ENCODE measurements at regions of chr16 and their contacts with region 1.

Region 1: GRCh38 chr16:89319883-89320781 is 102.6 kb downstream of the ZNF778 start:
- DNase-seq: no peak
- H3K4me3 ChIP-seq: no peak overlapping the region
- H3K4me3 Mint-ChIP-seq: peak overlapping the region in 7 of 8 donors; percentile 48 to 77 (median 68)
- H3K27ac ChIP-seq: no peak overlapping the region
- H3K27ac Mint-ChIP-seq: peak overlapping the region in 6 of 7 donors; percentile 55 to 98 (median 74)
- H3K4me1 ChIP-seq: peaks cover 99% of the 10 kb centered on the region
- H3K4me1 Mint-ChIP-seq: peaks cover 72 to 96% (median 89%) of the 10 kb centered on the region in 4 donors
- H3K27me3 ChIP-seq: no peaks in the 10 kb centered on the region
- H3K27me3 Mint-ChIP-seq: no peaks in the 10 kb centered on the region

Region 2: GRCh38 chr16:89241187-89242007 is 78.7 kb before region 1 on chr16:
- CTCF ChIA-PET with region 1: interaction called, 13 read pairs
- POLR2A ChIA-PET with region 1: interaction called, 17 read pairs
- intact Hi-C with region 1: no loop called
- DNase-seq: peak; percentile 92 to 97 (median 93)
- H3K4me3 ChIP-seq: peak overlapping the region; percentile 73 to 80
- H3K4me3 Mint-ChIP-seq: peak overlapping the region; percentile 90 to 98 (median 96)
- H3K27ac ChIP-seq: peak overlapping the region; percentile 91
- H3K27ac Mint-ChIP-seq: peak overlapping the region; percentile 95 to 100 (median 99)
- H3K4me1 ChIP-seq: peaks cover 13% of the 10 kb centered on the region
- H3K4me1 Mint-ChIP-seq: peaks cover 8 to 36% (median 18%) of the 10 kb centered on the region in 4 donors
- H3K27me3 ChIP-seq: no peaks in the 10 kb centered on the region
- H3K27me3 Mint-ChIP-seq: no peaks in the 10 kb centered on the region

Region 3: GRCh38 chr16:89297156-89297883 is 22.8 kb before region 1 on chr16:
- CTCF ChIA-PET with region 1: no interaction called
- POLR2A ChIA-PET with region 1: interaction called, 15 read pairs
- intact Hi-C with region 1: no loop called
- DNase-seq: peak in 1 of 5 donors; percentile 28
- H3K4me3 ChIP-seq: no peak overlapping the region
- H3K4me3 Mint-ChIP-seq: peak overlapping the region in 2 of 8 donors; percentile 5 to 42
- H3K27ac ChIP-seq: no peak overlapping the region
- H3K27ac Mint-ChIP-seq: peak overlapping the region in 5 of 7 donors; percentile 41 to 90 (median 47)
- H3K4me1 ChIP-seq: peaks cover 29% of the 10 kb centered on the region
- H3K4me1 Mint-ChIP-seq: peaks cover 25 to 53% (median 33%) of the 10 kb centered on the region in 4 donors
- H3K27me3 ChIP-seq: no peaks in the 10 kb centered on the region
- H3K27me3 Mint-ChIP-seq: no peaks in the 10 kb centered on the region

Region 4: GRCh38 chr16:89357055-89357816 is 37.1 kb after region 1 on chr16:
- CTCF ChIA-PET with region 1: interaction called, 4 read pairs
- POLR2A ChIA-PET with region 1: interaction called, 13 read pairs
- intact Hi-C with region 1: loop called (anchors 1 kb)
- DNase-seq: no peak
- H3K4me3 ChIP-seq: no peak overlapping the region
- H3K4me3 Mint-ChIP-seq: peak overlapping the region in 7 of 8 donors; percentile 40 to 86 (median 80)
- H3K27ac ChIP-seq: peak overlapping the region; percentile 60
- H3K27ac Mint-ChIP-seq: peak overlapping the region; percentile 75 to 90 (median 87)
- H3K4me1 ChIP-seq: peaks cover 88% of the 10 kb centered on the region
- H3K4me1 Mint-ChIP-seq: peaks cover 68 to 95% (median 83%) of the 10 kb centered on the region in 4 donors
- H3K27me3 ChIP-seq: no peaks in the 10 kb centered on the region
- H3K27me3 Mint-ChIP-seq: no peaks in the 10 kb centered on the region

Region 5: GRCh38 chr16:89410794-89411309 is 90.7 kb after region 1 on chr16:
- CTCF ChIA-PET with region 1: interaction called, 3 read pairs
- POLR2A ChIA-PET with region 1: interaction called, 16 read pairs
- intact Hi-C with region 1: no loop called
- DNase-seq: peak in 2 of 5 donors; percentile 21 to 28
- H3K4me3 ChIP-seq: no peak overlapping the region
- H3K4me3 Mint-ChIP-seq: peak overlapping the region in 7 of 8 donors; percentile 59 to 84 (median 69)
- H3K27ac ChIP-seq: peak overlapping the region; percentile 45
- H3K27ac Mint-ChIP-seq: peak overlapping the region; percentile 88 to 97 (median 95)
- H3K4me1 ChIP-seq: peaks cover 93% of the 10 kb centered on the region
- H3K4me1 Mint-ChIP-seq: peaks cover 57 to 93% (median 79%) of the 10 kb centered on the region in 4 donors
- H3K27me3 ChIP-seq: no peaks in the 10 kb centered on the region
- H3K27me3 Mint-ChIP-seq: no peaks in the 10 kb centered on the region

Region 6: DNA sequence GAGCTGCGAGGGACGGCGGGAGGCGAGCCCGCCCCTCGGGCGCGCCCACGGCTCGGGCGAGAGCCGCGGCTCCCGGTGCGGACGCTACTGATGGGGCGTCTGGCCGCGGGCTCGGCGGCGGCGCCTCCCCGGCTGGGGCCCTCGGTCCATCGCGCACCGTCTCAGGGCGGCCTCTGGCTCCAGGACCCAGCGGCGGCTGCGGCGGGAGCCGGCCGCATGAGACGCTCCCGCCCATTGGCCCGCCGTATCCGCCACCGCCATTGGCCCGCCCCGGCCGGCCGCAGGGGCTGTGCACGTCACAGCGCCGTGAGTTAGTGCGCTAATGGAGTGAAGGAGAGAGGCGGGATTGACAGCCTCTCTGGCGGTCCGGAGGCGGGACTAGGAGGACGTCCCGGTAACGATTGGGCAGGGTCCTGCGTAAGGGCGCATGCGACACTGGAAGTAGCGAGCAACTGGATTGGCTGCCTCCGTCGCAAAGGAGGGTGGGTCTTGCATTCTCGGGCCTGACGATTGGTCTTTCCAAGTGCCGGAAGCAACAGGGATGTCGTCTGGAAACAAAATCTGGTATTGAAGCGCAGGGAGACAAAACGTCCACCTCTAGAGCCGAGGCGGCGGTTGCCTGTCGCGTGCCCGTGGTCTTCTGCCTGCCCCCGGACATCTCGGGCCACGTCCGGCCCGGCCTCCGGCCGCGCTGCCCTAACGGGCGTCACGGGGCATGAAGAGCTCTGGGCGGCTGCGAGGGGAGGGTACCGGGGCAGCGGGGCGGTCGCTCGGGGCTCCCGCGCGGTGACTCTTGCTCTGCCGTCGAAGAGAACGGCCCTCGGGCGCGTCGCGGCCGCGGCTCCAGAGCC is 170.5 kb after region 1 on chr16 and contains the start of gene ANKRD11:
- CTCF ChIA-PET with region 1: no interaction called
- POLR2A ChIA-PET with region 1: interaction called, 27 read pairs
- intact Hi-C with region 1: loop called (anchors 5 kb)
- DNase-seq: peak; percentile 99 to 100 (median 100)
- H3K4me3 ChIP-seq: peak within 1 kb of the TSS; percentile 64 to 72
- H3K4me3 Mint-ChIP-seq: peak within 1 kb of the TSS; percentile 88 to 97 (median 94)
- H3K27ac ChIP-seq: peak within 1 kb of the TSS; percentile 95
- H3K27ac Mint-ChIP-seq: peak within 1 kb of the TSS; percentile 96 to 99 (median 97)
- H3K4me1 ChIP-seq: peaks cover 57% of the 10 kb centered on the region
- H3K4me1 Mint-ChIP-seq: peaks cover 35 to 77% (median 57%) of the 10 kb centered on the region in 4 donors
- H3K27me3 ChIP-seq: no peaks in the 10 kb centered on the region
- H3K27me3 Mint-ChIP-seq: no peaks in the 10 kb centered on the region
- total RNA-seq, gene ANKRD11: 229 to 246 TPM

Region 7: GRCh38 chr16:89560378-89561141 is 240.4 kb after region 1 on chr16 and contains the start of gene RPL13:
- CTCF ChIA-PET with region 1: interaction called, 12 read pairs
- POLR2A ChIA-PET with region 1: interaction called, 8 read pairs
- intact Hi-C with region 1: loop called (anchors 5 kb)
- DNase-seq: peak; percentile 91 to 94 (median 93)
- H3K4me3 ChIP-seq: peak within 1 kb of the TSS; percentile 73 to 85
- H3K4me3 Mint-ChIP-seq: peak within 1 kb of the TSS; percentile 95 to 99 (median 98)
- H3K27ac ChIP-seq: peak within 1 kb of the TSS; percentile 88
- H3K27ac Mint-ChIP-seq: peak within 1 kb of the TSS; percentile 97 to 99 (median 98)
- H3K4me1 ChIP-seq: peaks cover 58% of the 10 kb centered on the region
- H3K4me1 Mint-ChIP-seq: peaks cover 32 to 66% (median 50%) of the 10 kb centered on the region in 4 donors
- H3K27me3 ChIP-seq: no peaks in the 10 kb centered on the region
- H3K27me3 Mint-ChIP-seq: no peaks in the 10 kb centered on the region
- total RNA-seq, gene RPL13: 4,825 to 5,043 TPM

Measured in CD4-positive, alpha-beta memory T cell (primary cell).